Keratinocyte (primary cell): ENCODE measurements at regions of chr10 and their contacts with region 1.

Region 1: GRCh38 chr10:92184977-92185376 is 105.9 kb downstream of the CPEB3 start:
- DNase-seq: no peak
- H3K4me3 ChIP-seq: no peak overlapping the region
- H3K27ac ChIP-seq: no peak overlapping the region
- H3K4me1 ChIP-seq: no peaks in the 10 kb centered on the region
- H3K27me3 ChIP-seq: no peaks in the 10 kb centered on the region
- CTCF ChIP-seq: no peak

Region 2: GRCh38 chr10:92074126-92074887 is 110.7 kb before region 1 on chr10:
- dilution Hi-C with region 1: no loop called
- DNase-seq: no peak
- H3K4me3 ChIP-seq: no peak overlapping the region
- H3K27ac ChIP-seq: no peak overlapping the region
- H3K4me1 ChIP-seq: peaks cover 3% of the 10 kb centered on the region
- H3K27me3 ChIP-seq: no peaks in the 10 kb centered on the region
- CTCF ChIP-seq: peak in 1 of 3 experiments; percentile 28

Region 3: DNA sequence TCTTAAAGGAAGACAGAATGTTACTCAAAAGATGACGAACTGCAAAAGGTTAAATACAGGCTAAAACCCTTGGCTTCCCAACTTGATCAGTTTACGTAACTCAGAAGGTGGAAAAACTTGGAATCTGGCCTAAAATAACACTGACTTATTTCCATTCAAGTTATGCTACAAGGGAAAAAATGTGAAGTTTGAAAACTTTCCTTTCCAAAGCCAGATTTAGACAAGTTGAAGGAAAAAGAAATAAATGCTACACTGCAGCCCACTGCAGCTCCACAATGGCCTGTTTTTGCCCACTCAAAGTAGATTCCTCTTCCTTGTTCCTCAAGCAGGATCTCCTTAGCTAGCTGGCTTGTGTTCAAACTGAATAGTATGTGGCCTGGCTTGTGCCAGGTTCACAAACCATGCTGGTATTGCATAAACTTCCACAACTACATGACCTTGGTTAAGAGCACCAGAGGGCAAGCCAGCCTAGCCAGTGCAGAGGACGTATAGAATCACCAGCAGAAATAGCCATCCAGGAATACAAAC is 60.3 kb before region 1 on chr10:
- dilution Hi-C with region 1: loop called (anchors 5 kb)
- DNase-seq: no peak
- H3K4me3 ChIP-seq: no peak overlapping the region
- H3K27ac ChIP-seq: no peak overlapping the region
- H3K4me1 ChIP-seq: peaks cover 17% of the 10 kb centered on the region
- H3K27me3 ChIP-seq: no peaks in the 10 kb centered on the region
- CTCF ChIP-seq: no peak

Region 4: DNA sequence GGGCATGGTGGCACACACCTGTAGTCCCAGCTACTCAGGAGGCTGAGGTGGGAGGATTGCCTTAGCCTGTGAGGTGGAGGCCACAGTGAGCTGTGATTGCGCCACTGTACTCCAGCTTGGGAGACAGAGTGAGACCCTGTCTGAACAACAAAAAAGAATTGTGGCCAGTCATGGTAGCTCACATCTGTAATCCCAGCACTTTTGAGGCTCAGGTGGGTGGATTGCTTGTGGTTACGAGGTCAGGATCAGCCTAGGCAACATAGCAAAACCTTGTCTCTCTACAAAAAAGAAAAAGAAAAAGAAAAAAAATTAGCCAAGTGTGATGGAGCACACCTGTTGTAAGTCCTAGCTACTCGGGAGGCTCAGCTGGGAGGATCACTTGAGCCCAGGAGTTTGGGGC is 128.8 kb after region 1 on chr10:
- dilution Hi-C with region 1: no loop called
- DNase-seq: no peak
- H3K4me3 ChIP-seq: no peak overlapping the region
- H3K27ac ChIP-seq: no peak overlapping the region
- H3K4me1 ChIP-seq: no peaks in the 10 kb centered on the region
- H3K27me3 ChIP-seq: no peaks in the 10 kb centered on the region
- CTCF ChIP-seq: no peak